Mammary epithelial cell (primary cell): ENCODE measurements at regions of chr13 and their contacts with region 1.

Region 1: GRCh38 chr13:94435604-94436226 is 43.8 kb downstream of the DCT start:
- DNase-seq: peak; percentile 28
- H3K4me3 ChIP-seq: no peak overlapping the region
- H3K27ac ChIP-seq: no peak overlapping the region
- H3K4me1 ChIP-seq: no peaks in the 10 kb centered on the region
- H3K27me3 ChIP-seq: peaks cover 3% of the 10 kb centered on the region
- CTCF ChIP-seq: peak; percentile 45 to 61

Region 2: GRCh38 chr13:94549232-94550061 is 113.7 kb after region 1 on chr13:
- CTCF ChIA-PET with region 1: interaction called, 5 read pairs
- dilution Hi-C with region 1: no loop called
- in situ Hi-C with region 1: no loop called
- intact Hi-C with region 1: loop called (anchors 1 kb)
- DNase-seq: peak; percentile 88
- H3K4me3 ChIP-seq: peak overlapping the region; percentile 75 to 82 (median 78)
- H3K27ac ChIP-seq: peak overlapping the region; percentile 58
- H3K4me1 ChIP-seq: peaks cover 8% of the 10 kb centered on the region
- H3K27me3 ChIP-seq: no peaks in the 10 kb centered on the region
- CTCF ChIP-seq: no peak

Region 3: DNA sequence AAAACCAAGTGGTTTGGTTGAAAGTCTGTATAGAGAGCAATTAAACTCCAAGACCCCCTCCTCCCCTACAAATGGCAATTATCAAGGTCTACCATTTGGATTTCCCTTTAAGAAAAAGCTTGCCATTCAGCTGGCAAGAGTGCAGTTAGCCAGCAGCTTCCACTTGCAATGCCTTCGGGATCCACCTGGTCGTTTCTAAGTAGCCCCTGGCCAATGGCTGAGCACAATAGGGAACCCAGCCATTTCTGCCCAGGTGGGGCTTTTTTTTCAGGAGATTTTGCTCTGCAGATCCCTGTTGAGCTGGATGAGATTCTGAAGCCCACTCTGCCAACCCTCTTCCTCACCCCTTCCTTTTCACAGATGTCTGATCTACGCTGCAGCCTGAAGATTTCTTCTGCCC is 133.9 kb after region 1 on chr13:
- CTCF ChIA-PET with region 1: interaction called, 11 read pairs
- dilution Hi-C with region 1: no loop called
- in situ Hi-C with region 1: no loop called
- intact Hi-C with region 1: no loop called
- DNase-seq: no peak
- H3K4me3 ChIP-seq: no peak overlapping the region
- H3K27ac ChIP-seq: no peak overlapping the region
- H3K4me1 ChIP-seq: no peaks in the 10 kb centered on the region
- H3K27me3 ChIP-seq: no peaks in the 10 kb centered on the region
- CTCF ChIP-seq: no peak

Region 4: DNA sequence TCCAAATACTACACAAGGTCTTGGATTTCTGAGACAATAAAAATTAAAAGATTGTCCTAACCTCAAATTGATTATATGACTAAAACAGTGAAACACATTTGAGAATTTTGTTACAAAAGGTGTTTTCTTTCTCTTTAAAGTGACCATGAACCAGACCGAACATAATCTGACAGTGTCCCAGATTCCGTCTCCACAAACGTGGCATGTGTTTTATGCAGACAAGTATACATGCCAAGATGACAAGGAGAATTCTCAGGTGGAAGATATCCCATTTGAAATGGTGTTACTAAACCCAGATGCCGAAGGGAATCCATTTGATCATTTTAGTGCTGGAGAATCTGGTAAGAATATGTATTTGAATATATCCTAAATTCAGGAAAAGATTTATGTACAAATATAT is 176.3 kb after region 1 on chr13:
- CTCF ChIA-PET with region 1: interaction called, 13 read pairs
- dilution Hi-C with region 1: no loop called
- in situ Hi-C with region 1: loop called in 1 of 2 experiments (anchors 5 kb)
- intact Hi-C with region 1: loop called (anchors 1 kb)
- DNase-seq: no peak
- H3K4me3 ChIP-seq: no peak overlapping the region
- H3K27ac ChIP-seq: no peak overlapping the region
- H3K4me1 ChIP-seq: no peaks in the 10 kb centered on the region
- H3K27me3 ChIP-seq: no peaks in the 10 kb centered on the region
- CTCF ChIP-seq: no peak

Region 5: GRCh38 chr13:95156208-95156607 is 720.5 kb after region 1 on chr13:
- CTCF ChIA-PET with region 1: no interaction called
- dilution Hi-C with region 1: no loop called
- in situ Hi-C with region 1: no loop called
- intact Hi-C with region 1: loop called (anchors 2 kb)
- DNase-seq: no peak
- H3K4me3 ChIP-seq: no peak overlapping the region
- H3K27ac ChIP-seq: no peak overlapping the region
- H3K4me1 ChIP-seq: no peaks in the 10 kb centered on the region
- H3K27me3 ChIP-seq: no peaks in the 10 kb centered on the region
- CTCF ChIP-seq: peak in 1 of 2 donors; percentile 53